CD8-positive, alpha-beta T cell (primary cell): ENCODE measurements at regions of chr9 and their contacts with region 1.

Region 1: DNA sequence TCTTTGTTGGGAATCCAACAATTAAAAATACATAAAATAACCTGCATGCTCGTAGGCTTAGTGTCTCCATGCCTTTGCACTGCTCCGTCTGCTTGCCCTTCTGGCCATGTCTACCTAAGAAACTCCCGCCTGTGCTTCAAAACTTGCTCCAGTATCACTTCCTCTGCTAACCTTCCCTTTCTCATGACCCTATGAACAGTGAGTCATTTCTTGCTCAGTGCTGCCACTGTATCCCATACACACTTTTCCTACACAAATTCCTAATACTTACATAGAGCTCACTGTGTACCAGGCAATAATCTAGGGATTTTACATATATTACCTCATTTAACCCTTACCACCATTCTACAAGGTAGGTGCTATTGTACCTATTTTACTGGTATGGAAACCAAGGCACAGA is 33.5 kb downstream of the TMEM245 start:
- DNase-seq: no peak
- ATAC-seq: no peak
- H3K4me3 ChIP-seq: no peak overlapping the region
- H3K4me3 Mint-ChIP-seq: no peak overlapping the region
- H3K27ac ChIP-seq: no peak overlapping the region
- H3K27ac Mint-ChIP-seq: no peak overlapping the region
- H3K4me1 ChIP-seq: no peaks in the 10 kb centered on the region
- H3K4me1 Mint-ChIP-seq: peaks cover 7% of the 10 kb centered on the region
- H3K27me3 ChIP-seq: no peaks in the 10 kb centered on the region
- H3K27me3 Mint-ChIP-seq: no peaks in the 10 kb centered on the region
- CTCF ChIP-seq: no peak

Region 2: DNA sequence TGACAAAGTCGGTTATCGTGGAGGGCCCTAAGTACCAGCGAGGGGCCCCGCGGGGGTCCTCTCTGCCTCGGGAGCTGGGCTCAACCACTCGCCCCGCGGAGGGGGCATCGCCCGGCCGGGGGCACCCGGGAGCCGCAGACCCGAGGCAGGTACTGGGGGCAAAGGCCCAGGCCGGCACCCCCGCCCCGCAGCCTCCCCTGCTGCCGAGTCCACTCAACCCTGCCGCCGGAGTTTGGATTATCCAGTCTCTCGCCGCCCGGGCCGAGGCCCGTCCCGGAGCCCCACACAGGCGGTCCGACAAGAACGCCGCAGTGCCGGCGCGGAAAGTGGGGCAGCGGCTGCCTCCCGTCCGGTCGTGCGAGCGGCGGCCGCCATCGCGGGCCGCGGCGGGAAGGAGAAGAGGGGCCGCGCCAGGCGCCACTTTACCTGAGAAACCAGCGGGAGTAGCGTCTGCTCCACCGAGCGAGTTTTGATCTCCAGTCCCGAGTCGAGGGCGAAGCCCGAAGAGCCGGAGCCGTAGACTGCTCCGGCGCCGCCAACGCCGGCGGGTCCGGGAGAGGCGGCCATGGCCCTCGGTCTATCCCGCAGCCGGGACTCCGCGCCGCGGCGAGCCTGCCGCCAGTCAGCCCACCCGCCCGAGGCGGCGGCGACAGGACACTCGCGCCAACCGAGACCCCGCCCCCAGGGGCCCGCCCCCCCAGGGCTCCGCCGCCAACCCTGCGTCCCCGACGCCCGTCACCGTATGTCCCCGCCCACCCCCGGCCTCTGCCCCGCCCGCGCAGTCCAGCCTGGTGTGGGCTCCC is 73.2 kb before region 1 on chr9 and contains the start of gene CTNNAL1:
- CTCF ChIA-PET with region 1: no interaction called
- POLR2A ChIA-PET with region 1: no interaction called
- intact Hi-C with region 1: no loop called
- DNase-seq: peak; percentile 74 to 92 (median 87)
- ATAC-seq: peak; percentile 91
- H3K4me3 ChIP-seq: peak within 1 kb of the TSS; percentile 45 to 56
- H3K4me3 Mint-ChIP-seq: peak within 1 kb of the TSS; percentile 95
- H3K27ac ChIP-seq: peak within 1 kb of the TSS; percentile 47 to 68
- H3K27ac Mint-ChIP-seq: peak within 1 kb of the TSS; percentile 91
- H3K4me1 ChIP-seq: peaks cover 7% of the 10 kb centered on the region
- H3K4me1 Mint-ChIP-seq: peaks cover 26% of the 10 kb centered on the region
- H3K27me3 ChIP-seq: no peaks in the 10 kb centered on the region
- H3K27me3 Mint-ChIP-seq: peaks cover 10% of the 10 kb centered on the region
- CTCF ChIP-seq: no peak
- total RNA-seq, gene CTNNAL1: 4.5 to 4.8 TPM

Region 3: GRCh38 chr9:109101810-109102209 is 15.6 kb after region 1 on chr9:
- CTCF ChIA-PET with region 1: no interaction called
- POLR2A ChIA-PET with region 1: no interaction called
- intact Hi-C with region 1: loop called in 1 of 2 experiments (anchors 2 kb)
- DNase-seq: peak in 2 of 9 experiments; percentile 38 to 73
- ATAC-seq: peak; percentile 72
- H3K4me3 ChIP-seq: peak overlapping the region; percentile 21 to 38
- H3K4me3 Mint-ChIP-seq: peak overlapping the region; percentile 73
- H3K27ac ChIP-seq: peak overlapping the region; percentile 54 to 71
- H3K27ac Mint-ChIP-seq: peak overlapping the region; percentile 90
- H3K4me1 ChIP-seq: peaks cover 51% of the 10 kb centered on the region
- H3K4me1 Mint-ChIP-seq: peaks cover 66% of the 10 kb centered on the region
- H3K27me3 ChIP-seq: no peaks in the 10 kb centered on the region
- H3K27me3 Mint-ChIP-seq: no peaks in the 10 kb centered on the region
- CTCF ChIP-seq: no peak

Region 4: DNA sequence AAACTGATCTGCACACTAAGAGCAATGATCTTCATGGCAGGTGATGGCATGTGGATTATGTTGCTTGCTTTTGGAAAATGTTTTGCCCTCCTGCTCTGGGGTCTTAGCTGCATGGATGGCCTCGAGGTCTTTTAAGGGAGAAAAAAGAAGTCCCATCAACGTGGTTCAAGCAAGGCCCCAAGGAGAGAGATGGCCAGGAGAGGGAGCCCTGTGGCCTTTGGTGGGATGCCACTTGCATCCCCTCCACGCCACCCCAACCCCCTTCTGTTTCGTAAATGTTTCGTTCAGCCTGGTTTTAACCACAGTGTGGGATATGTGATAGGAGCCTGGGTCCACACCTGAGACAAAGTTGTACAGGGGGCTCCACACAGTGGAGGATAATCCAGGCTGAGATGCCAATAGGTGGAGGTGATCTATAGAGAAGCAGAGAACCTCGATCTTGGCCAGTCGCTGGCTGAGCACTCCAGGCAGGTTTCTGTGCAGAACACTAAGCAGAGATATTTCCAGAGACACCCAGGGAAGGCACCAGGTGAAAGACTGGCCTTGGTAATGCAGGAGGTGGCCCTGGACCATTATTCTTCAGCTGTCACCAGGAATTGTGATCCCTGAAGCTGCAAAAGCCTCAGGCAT is 106.6 kb after region 1 on chr9:
- CTCF ChIA-PET with region 1: no interaction called
- POLR2A ChIA-PET with region 1: no interaction called
- intact Hi-C with region 1: loop called in 1 of 2 experiments (anchors 10 kb)
- DNase-seq: peak in 1 of 9 experiments; percentile 36
- ATAC-seq: no peak
- H3K4me3 ChIP-seq: no peak overlapping the region
- H3K4me3 Mint-ChIP-seq: no peak overlapping the region
- H3K27ac ChIP-seq: no peak overlapping the region
- H3K27ac Mint-ChIP-seq: no peak overlapping the region
- H3K4me1 ChIP-seq: no peaks in the 10 kb centered on the region
- H3K4me1 Mint-ChIP-seq: no peaks in the 10 kb centered on the region
- H3K27me3 ChIP-seq: no peaks in the 10 kb centered on the region
- H3K27me3 Mint-ChIP-seq: peaks cover 4% of the 10 kb centered on the region
- CTCF ChIP-seq: no peak